GM13976 (cell line): ENCODE measurements at regions of chr2 and their contacts with region 1.

Region 1: GRCh38 chr2:101151141-101151858 is at the start of gene TBC1D8:
- DNase-seq: peak; percentile 93
- CTCF ChIP-seq: no peak

Region 2: GRCh38 chr2:101026253-101026701 is 125.0 kb before region 1 on chr2:
- in situ Hi-C with region 1: loop called (anchors 10 kb)
- DNase-seq: no peak
- CTCF ChIP-seq: no peak